ENCODE measurements at regions of chr12 and their contacts with region 1.

Region 1: DNA sequence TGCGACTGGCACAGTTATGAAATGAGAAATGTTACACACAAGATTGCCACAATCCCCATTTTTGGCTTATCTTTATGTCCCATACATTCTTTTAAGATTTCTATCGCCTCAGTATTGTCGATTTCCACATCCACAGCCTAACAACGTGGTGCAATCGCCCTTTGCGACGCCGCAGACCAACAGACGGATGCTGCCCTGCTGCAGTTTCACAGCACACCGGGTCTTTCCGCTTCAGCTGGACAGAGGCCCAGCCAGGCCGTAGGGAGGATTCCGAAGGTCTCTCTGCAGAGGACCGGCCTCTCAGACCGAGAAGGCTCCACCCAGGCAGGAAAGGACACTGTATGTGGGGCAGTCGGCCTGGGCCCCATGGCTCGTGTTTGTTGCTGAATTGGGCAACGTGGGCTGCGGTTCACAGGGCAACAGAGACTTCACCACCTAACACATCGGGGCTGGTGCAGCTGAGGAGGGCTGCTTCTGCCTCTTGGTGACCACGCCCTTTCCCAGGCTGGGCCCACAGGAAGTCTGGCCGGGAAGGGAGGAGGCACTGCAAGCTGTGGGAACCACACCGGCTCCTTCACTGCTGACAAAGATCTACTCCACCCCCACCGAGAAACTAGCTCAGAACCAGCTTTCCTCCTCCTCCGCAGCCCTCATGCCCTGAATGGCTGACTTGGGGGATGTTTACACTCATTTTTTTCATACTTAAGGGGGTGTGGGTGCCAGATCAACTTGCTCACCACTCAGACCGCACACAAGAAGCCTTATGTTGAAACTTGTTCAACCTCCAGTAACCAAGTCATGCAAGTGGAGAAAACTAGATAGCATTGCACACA is 32.9 kb upstream of the MDM1 start:
- DNase-seq: peak; percentile 85
- H3K4me3 Mint-ChIP-seq: peak overlapping the region; percentile 61
- H3K27ac Mint-ChIP-seq: peak overlapping the region; percentile 84
- H3K4me1 Mint-ChIP-seq: peaks cover 42% of the 10 kb centered on the region
- H3K27me3 Mint-ChIP-seq: no peaks in the 10 kb centered on the region

Region 2: GRCh38 chr12:68497702-68498101 is 132.6 kb after region 1 on chr12:
- intact Hi-C with region 1: loop called (anchors 2 kb)
- DNase-seq: no peak
- H3K4me3 Mint-ChIP-seq: peak overlapping the region; percentile 51
- H3K27ac Mint-ChIP-seq: peak overlapping the region; percentile 86
- H3K4me1 Mint-ChIP-seq: peaks cover 33% of the 10 kb centered on the region
- H3K27me3 Mint-ChIP-seq: peaks cover 3% of the 10 kb centered on the region

Region 3: DNA sequence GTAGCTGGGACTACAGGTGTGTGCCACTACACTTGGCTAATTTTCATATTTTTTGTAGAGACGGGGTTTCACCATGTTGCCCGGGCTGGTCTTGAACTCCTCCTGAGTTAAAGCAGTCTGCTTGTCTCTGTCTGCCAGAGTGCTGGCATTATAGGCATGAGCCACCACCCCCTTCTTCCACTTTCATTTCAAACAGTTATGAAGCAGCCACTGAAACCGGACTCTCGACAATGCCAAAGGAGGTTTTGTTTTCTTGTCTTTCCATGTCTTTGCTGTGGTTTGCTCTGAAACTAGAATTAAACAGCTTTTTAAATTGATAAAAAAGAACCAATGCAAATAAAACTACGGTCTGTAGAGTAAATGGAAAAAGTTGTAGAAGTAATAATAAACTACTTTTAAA is 276.0 kb after region 1 on chr12:
- intact Hi-C with region 1: loop called (anchors 2 kb)
- DNase-seq: peak; percentile 48
- H3K4me3 Mint-ChIP-seq: peak overlapping the region; percentile 6
- H3K27ac Mint-ChIP-seq: peak overlapping the region; percentile 28
- H3K4me1 Mint-ChIP-seq: peaks cover 57% of the 10 kb centered on the region
- H3K27me3 Mint-ChIP-seq: no peaks in the 10 kb centered on the region